ENCODE measurements at regions of chr11 and their contacts with region 1.

Region 1: GRCh38 chr11:2151500-2152257 is 9.3 kb downstream of the INS start:
- DNase-seq: peak; percentile 87 to 90 (median 88)
- ATAC-seq: peak; percentile 74
- H3K4me3 ChIP-seq: no peak overlapping the region
- H3K27ac ChIP-seq: peak overlapping the region in 2 of 4 donors; percentile 37 to 40
- H3K4me1 ChIP-seq: peaks cover 6% of the 10 kb centered on the region
- H3K27me3 ChIP-seq: peaks cover 0 to 11% of the 10 kb centered on the region in 2 donors
- CTCF ChIP-seq: peak; percentile 64 to 94 (median 85)
- POLR2A ChIP-seq: no peak

Region 2: DNA sequence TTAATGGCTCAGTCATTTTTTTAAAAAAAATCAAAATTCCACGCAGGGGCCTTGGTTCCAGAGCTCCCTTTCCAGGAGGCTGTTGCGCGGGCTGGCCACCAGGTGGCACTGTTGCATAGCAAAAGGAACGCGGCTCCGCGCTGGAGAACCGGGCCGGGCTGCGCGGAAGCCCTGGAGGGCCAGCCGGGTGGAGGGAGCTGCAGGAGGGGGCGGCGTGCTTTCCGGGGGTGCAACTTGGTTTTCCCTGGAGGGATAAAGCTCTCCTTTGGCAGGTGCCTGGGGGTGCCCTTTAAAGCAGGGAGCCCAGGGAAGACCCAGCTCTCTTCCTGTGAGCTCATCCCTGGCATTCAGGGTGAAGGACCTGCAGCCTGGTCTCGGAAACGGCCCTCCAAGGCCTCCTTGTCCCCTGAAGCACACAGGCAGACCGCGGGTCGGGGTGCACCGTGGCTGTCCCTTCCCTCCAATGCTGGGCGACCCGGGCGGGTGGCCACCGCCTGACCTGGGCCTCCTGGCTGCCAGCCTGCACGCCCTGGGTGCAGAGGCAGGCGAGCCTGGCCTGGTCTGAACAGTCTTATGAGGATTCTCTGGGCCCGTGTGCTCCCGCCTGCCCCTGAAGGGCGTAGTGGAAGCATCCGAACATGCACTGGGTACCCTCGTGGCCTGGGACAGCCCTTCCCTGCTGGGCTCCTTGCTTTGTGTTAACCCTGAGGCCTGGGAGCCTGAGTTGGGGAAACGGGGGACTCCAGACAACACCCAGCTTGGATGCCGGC is 498.7 kb before region 1 on chr11:
- intact Hi-C with region 1: loop called (anchors 10 kb)
- DNase-seq: peak; percentile 69 to 82 (median 77)
- ATAC-seq: peak; percentile 81
- H3K4me3 ChIP-seq: no peak overlapping the region
- H3K27ac ChIP-seq: no peak overlapping the region
- H3K4me1 ChIP-seq: peaks cover 5% of the 10 kb centered on the region
- H3K27me3 ChIP-seq: no peaks in the 10 kb centered on the region
- CTCF ChIP-seq: peak; percentile 82 to 99 (median 96)
- POLR2A ChIP-seq: no peak

Region 3: DNA sequence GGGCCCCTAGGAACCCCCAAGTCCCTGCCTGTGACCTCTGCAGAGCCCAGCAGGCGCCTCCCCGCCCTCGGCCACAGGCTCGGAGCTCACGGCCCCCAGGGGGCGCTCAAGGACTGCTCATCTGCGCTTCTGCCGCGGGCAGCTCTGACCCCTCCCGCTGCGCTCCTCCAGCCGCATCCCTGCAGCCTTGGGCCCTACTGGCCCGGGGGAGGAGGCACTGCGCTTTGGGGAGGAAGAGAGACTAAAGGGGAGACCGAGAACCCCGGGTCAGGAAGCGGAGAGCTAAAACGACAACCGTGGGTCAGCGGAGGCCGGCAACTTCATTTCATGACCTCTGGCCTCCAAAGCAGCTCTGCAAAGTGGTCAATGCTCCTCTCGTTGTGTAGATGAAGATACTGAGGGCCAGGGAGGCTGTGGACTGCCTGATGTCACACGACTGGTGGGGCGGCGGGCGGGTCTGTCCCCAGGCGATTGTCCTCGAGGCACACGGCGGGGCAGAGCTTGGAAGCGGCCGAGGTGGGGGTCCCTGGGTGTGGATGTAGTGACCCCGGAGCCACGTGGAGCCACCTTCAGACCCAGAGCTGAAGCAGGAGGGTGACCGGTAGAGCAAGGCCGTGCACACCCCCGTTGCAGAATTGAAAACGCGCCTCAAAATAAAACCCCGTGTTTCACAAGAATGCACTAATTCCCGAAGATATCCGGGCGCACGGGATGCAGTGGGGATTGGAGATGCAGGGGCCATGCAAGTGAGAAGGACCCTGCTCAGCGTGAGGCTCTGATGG is 457.4 kb before region 1 on chr11:
- intact Hi-C with region 1: loop called (anchors 5 kb)
- DNase-seq: peak; percentile 89 to 91 (median 90)
- ATAC-seq: peak; percentile 95
- H3K4me3 ChIP-seq: no peak overlapping the region
- H3K27ac ChIP-seq: peak overlapping the region in 2 of 4 donors; percentile 44 to 64
- H3K4me1 ChIP-seq: peaks cover 15% of the 10 kb centered on the region
- H3K27me3 ChIP-seq: no peaks in the 10 kb centered on the region
- CTCF ChIP-seq: peak; percentile 85 to 95 (median 92)
- POLR2A ChIP-seq: no peak

Region 4: DNA sequence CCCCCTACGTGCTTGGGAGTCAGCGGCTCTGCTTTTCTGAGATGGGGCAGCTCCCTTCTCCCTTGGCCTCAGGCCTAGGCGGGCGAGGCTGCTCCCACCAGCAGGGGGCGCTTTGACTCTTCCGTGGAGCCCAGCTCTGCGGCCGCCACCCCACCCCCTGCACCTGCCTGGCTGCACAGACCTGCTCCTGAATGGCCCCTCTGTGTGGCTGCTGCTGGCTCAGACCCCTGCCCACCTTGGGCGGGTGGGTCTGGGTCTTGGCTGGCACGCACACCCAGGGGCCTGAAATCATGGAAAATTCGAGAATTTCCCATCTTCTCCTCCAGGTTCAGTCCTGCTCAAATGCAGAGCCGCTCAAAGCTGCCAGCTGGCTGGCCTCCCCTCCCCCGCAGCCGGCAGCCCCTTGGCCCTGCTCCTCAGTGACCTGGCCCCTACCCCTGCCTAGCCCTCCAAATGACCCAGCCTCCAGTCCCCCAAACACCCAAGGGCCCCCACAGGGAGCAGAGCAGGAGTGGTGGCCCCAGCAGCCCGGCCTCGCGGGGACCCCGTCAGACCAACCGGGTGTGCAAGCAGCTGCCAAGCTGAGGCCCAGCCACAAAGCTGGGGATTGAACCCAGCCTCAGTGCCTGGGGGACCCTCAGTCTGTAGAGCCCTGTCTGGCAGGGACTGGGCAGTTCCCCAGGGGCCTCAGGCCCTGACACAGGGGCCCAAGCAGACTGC is 269.0 kb before region 1 on chr11:
- intact Hi-C with region 1: loop called (anchors 5 kb)
- DNase-seq: peak; percentile 83 to 88 (median 84)
- ATAC-seq: peak; percentile 88
- H3K4me3 ChIP-seq: no peak overlapping the region
- H3K27ac ChIP-seq: peak overlapping the region in 1 of 4 donors; percentile 3
- H3K4me1 ChIP-seq: peaks cover 15% of the 10 kb centered on the region
- H3K27me3 ChIP-seq: no peaks in the 10 kb centered on the region
- CTCF ChIP-seq: peak; percentile 84 to 95 (median 87)
- POLR2A ChIP-seq: no peak

Region 5: GRCh38 chr11:2466869-2467698 is 315.4 kb after region 1 on chr11:
- intact Hi-C with region 1: no loop called
- DNase-seq: peak in 2 of 4 donors; percentile 8 to 15
- ATAC-seq: no peak
- H3K4me3 ChIP-seq: no peak overlapping the region
- H3K27ac ChIP-seq: peak overlapping the region in 1 of 4 donors; percentile 99
- H3K4me1 ChIP-seq: peaks cover 51% of the 10 kb centered on the region
- H3K27me3 ChIP-seq: no peaks in the 10 kb centered on the region
- CTCF ChIP-seq: no peak
- POLR2A ChIP-seq: no peak